ENCODE measurements at regions of chr17 and their contacts with region 1.

Region 1: GRCh38 chr17:55717898-55718735 is 4.5 kb downstream of the TMEM100 start:
- DNase-seq: peak; percentile 87
- ATAC-seq: no peak
- H3K4me3 Mint-ChIP-seq: no peak overlapping the region
- H3K27ac Mint-ChIP-seq: no peak overlapping the region
- H3K4me1 Mint-ChIP-seq: no peaks in the 10 kb centered on the region
- H3K27me3 Mint-ChIP-seq: peaks cover 25% of the 10 kb centered on the region
- CTCF ChIP-seq: peak; percentile 74

Region 2: DNA sequence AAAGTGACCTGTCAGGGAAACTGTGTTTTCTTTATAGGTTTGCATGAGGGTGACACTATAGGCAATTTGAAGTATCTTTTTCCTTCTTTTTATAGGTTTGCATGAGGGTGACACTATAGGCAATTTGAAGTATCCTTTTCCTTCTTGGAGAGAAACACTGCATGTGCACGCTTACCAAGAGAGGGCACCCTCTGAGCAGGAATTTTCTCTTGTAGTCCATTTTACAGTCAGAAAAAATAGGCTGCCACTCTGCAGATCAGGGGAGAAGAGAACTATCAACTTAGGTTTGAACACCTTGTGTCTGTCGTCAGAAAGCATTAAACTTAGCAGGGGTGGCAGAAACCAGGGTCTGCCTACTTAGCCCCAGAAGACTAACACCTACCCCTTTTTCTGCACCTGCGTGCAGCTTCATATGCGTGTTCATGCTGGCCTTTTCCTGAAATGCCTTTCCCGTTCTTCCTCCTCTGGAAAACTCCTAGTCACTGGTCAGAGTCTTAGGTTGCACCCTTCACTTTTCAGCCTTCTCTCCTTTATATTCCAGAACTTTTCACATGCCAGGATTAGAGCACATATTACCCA is 190.5 kb before region 1 on chr17:
- CTCF ChIA-PET with region 1: interaction called, 22 read pairs
- POLR2A ChIA-PET with region 1: no interaction called
- intact Hi-C with region 1: loop called (anchors 5 kb)
- DNase-seq: peak; percentile 13
- ATAC-seq: no peak
- H3K4me3 Mint-ChIP-seq: no peak overlapping the region
- H3K27ac Mint-ChIP-seq: no peak overlapping the region
- H3K4me1 Mint-ChIP-seq: peaks cover 3% of the 10 kb centered on the region
- H3K27me3 Mint-ChIP-seq: peaks cover 5% of the 10 kb centered on the region
- CTCF ChIP-seq: no peak

Region 3: GRCh38 chr17:55601874-55602364 is 116.2 kb before region 1 on chr17:
- CTCF ChIA-PET with region 1: interaction called, 13 read pairs
- POLR2A ChIA-PET with region 1: no interaction called
- intact Hi-C with region 1: no loop called
- DNase-seq: peak; percentile 14
- ATAC-seq: peak; percentile 58
- H3K4me3 Mint-ChIP-seq: no peak overlapping the region
- H3K27ac Mint-ChIP-seq: no peak overlapping the region
- H3K4me1 Mint-ChIP-seq: no peaks in the 10 kb centered on the region
- H3K27me3 Mint-ChIP-seq: peaks cover 7% of the 10 kb centered on the region
- CTCF ChIP-seq: peak; percentile 62

Region 4: DNA sequence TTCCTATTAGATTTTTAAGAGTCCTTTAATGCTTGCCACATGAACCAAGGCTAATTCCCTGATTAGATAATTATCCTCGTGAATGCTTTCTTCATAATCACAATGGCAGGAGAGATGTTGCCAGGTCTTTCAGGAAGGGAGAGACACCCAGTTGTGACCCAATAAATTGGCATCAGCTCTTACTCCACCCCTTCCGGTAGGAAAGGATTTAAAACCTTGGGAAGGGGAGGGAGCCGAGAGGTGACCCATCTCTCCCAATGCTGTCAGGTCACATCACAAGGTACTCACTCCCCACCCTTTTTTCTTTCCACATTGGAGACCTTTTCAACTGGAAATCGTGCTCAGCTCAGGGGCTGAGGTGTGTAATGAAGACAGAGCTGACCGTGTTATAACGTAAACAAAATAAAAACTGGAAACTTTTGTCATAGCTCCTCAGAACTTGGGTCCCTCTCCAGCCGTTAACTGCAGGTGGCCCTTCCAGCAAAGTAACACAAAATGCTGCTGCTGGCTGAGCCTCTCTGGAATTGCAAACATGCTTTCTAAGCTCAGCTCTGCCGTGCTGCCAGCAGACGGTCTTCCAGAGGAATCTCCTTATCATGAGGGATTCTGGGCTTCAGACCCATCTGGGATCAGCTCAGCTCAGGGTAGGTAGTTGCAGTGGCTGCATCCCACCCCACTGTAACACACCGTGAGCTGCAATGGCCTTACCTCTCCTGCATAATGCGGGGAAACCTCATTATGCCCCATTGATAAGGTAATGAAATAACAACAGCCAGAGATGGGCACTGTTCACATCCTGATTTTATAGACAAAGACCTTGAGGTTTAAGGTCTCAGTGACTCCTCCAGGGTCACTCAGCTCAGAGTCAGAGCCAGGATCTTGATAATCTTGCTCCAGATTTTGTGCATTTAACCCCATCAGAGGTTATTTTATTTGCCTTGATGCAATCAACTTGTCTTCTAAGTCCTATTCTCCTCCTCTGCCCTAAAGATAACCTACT is 11.0 kb before region 1 on chr17:
- CTCF ChIA-PET with region 1: interaction called, 11 read pairs
- POLR2A ChIA-PET with region 1: no interaction called
- intact Hi-C with region 1: no loop called
- DNase-seq: no peak
- ATAC-seq: no peak
- H3K4me3 Mint-ChIP-seq: no peak overlapping the region
- H3K27ac Mint-ChIP-seq: no peak overlapping the region
- H3K4me1 Mint-ChIP-seq: no peaks in the 10 kb centered on the region
- H3K27me3 Mint-ChIP-seq: peaks cover 22% of the 10 kb centered on the region
- CTCF ChIP-seq: no peak

Region 5: DNA sequence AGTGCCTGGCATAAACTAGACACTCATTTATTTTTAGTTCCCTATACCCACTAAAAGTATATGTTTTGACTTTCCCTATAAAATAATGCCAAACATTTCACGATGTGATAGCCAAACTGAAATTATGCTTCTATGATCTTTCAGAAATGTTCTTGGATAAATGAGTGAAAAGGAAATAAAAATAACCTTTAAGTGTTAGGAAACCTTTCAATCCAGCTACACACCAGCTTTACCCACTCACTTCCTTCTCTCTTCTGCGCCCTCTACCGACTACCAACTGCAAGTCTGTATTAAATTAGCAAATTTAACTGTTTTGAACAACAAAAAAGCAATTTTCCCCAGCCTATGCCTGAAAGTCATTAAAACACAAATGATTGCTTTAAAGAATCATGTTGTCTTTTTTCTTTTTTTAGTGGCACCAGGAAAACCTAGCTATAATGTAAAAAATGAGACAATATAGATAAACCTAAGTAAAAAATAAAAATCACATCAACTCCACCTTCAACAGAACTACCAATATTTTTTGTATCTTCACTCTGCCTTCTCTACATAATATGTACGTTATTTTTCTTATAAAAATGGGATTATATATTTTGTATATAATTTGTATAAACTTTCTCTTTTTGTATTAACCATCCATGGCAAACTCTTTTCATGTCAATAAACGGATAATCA is 17.8 kb after region 1 on chr17:
- CTCF ChIA-PET with region 1: interaction called, 26 read pairs
- POLR2A ChIA-PET with region 1: no interaction called
- intact Hi-C with region 1: no loop called
- DNase-seq: peak; percentile 51
- ATAC-seq: no peak
- H3K4me3 Mint-ChIP-seq: no peak overlapping the region
- H3K27ac Mint-ChIP-seq: no peak overlapping the region
- H3K4me1 Mint-ChIP-seq: peaks cover 31% of the 10 kb centered on the region
- H3K27me3 Mint-ChIP-seq: peaks cover 23% of the 10 kb centered on the region
- CTCF ChIP-seq: peak; percentile 81

Region 6: DNA sequence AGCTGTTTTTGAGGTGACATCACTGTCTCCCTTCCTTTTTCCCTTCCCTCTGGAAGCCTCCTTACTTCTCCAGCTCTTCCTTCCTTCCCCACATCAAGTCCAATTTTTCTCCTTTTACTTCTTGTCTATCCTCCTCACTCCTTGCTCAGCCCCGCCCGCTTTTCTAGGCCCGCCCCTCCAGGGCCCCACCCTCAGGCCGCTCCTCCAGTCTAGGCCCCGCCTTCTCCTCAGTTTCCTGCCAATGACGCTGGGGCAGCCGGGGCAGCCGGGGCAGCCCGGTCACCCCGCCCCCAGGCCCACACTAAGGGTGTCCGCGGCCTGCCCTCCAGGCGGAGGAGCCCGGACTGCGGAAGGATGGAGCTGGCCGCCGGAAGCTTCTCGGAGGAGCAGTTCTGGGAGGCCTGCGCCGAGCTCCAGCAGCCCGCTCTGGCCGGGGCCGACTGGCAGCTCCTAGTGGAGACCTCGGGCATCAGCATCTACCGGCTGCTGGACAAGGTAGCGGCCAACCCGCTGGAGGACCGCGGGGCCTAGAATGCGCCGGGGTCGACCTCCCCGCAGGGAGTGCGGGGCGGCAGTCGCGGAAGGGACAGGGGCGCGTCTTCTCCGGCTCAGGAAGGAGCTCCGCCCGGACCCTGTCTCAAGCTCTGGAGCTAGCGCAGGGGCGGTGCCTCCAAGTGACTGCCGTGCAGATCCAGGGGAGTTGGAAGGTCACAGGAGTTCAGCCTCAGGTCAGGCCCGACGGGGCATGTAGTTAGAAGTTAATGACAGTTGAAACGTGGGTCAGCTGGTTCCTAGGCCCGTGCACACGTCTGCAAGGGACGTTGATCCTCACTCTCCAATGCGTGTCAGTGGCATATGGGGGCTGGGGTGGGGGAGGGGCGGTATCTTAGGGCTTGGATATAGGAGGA is 32.9 kb after region 1 on chr17 and contains the start of gene PCTP:
- CTCF ChIA-PET with region 1: interaction called, 11 read pairs
- POLR2A ChIA-PET with region 1: no interaction called
- intact Hi-C with region 1: no loop called
- DNase-seq: peak; percentile 90
- ATAC-seq: peak; percentile 99
- H3K4me3 Mint-ChIP-seq: peak within 1 kb of the TSS; percentile 80
- H3K27ac Mint-ChIP-seq: peak within 1 kb of the TSS; percentile 27
- H3K4me1 Mint-ChIP-seq: peaks cover 13% of the 10 kb centered on the region
- H3K27me3 Mint-ChIP-seq: peaks cover 14% of the 10 kb centered on the region
- CTCF ChIP-seq: peak; percentile 59
- total RNA-seq, gene PCTP: 6.6 to 7.7 TPM

Region 7: GRCh38 chr17:55811536-55811935 is 93.4 kb after region 1 on chr17:
- CTCF ChIA-PET with region 1: no interaction called
- POLR2A ChIA-PET with region 1: no interaction called
- intact Hi-C with region 1: no loop called
- DNase-seq: no peak
- ATAC-seq: no peak
- H3K4me3 Mint-ChIP-seq: no peak overlapping the region
- H3K27ac Mint-ChIP-seq: no peak overlapping the region
- H3K4me1 Mint-ChIP-seq: peaks cover 6% of the 10 kb centered on the region
- H3K27me3 Mint-ChIP-seq: peaks cover 8% of the 10 kb centered on the region
- CTCF ChIP-seq: no peak

Measured in activated CD8-positive, alpha-beta T cell treated with anti-CD3 and anti-CD28 coated beads for 36 hours (primary cell).